ENCODE measurements at regions of chr16 and their contacts with region 1.

Region 1: GRCh38 chr16:67816240-67817031 is 9.7 kb downstream of the TSNAXIP1 start:
- DNase-seq: no peak
- ATAC-seq: peak; percentile 98
- H3K4me3 ChIP-seq: no peak overlapping the region
- H3K27ac ChIP-seq: no peak overlapping the region
- H3K4me1 ChIP-seq: no peaks in the 10 kb centered on the region
- H3K27me3 ChIP-seq: no peaks in the 10 kb centered on the region
- CTCF ChIP-seq: peak; percentile 100; a peak in 5 of 6 replicates
- EP300 ChIP-seq: no peak
- POLR2A ChIP-seq: no peak
- RAD21 ChIP-seq: peak; percentile 85

Region 2: GRCh38 chr16:67301080-67301782 is 515.2 kb before region 1 on chr16:
- CTCF ChIA-PET with region 1: no interaction called
- POLR2A ChIA-PET with region 1: no interaction called
- RAD21 ChIA-PET with region 1: no interaction called
- SMC1A ChIA-PET with region 1: no interaction called
- in situ Hi-C with region 1: no loop called
- intact Hi-C with region 1: no loop called
- DNase-seq: no peak
- ATAC-seq: no peak
- H3K4me3 ChIP-seq: no peak overlapping the region
- H3K27ac ChIP-seq: no peak overlapping the region
- H3K4me1 ChIP-seq: no peaks in the 10 kb centered on the region
- H3K27me3 ChIP-seq: peaks cover 0 to 2% of the 10 kb centered on the region in 2 experiments; a peak in 1 of 4 replicates
- CTCF ChIP-seq: no peak
- EP300 ChIP-seq: no peak
- POLR2A ChIP-seq: no peak
- RAD21 ChIP-seq: no peak

Region 3: DNA sequence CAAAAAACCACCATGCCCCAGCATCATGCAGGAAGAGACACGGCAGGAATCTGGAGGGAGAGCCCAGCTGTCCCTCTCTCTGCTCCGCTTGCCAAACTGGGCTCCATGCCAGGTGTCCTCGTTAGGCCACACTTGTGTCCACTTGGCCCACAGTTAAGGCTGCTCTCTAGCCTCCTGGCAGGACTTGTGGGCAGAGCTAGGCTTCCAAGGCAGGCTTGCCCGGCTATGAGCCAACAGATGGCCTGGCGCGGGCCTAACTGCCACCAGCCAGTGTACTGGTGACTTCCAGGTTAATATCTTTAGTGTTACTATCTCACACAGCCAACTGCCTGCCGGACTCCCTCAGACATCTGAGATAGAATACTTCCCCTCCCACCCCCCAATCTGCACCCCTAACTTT is 346.1 kb before region 1 on chr16:
- CTCF ChIA-PET with region 1: no interaction called
- POLR2A ChIA-PET with region 1: no interaction called
- RAD21 ChIA-PET with region 1: no interaction called
- SMC1A ChIA-PET with region 1: no interaction called
- in situ Hi-C with region 1: no loop called
- intact Hi-C with region 1: no loop called
- DNase-seq: no peak
- ATAC-seq: no peak
- H3K4me3 ChIP-seq: no peak overlapping the region
- H3K27ac ChIP-seq: no peak overlapping the region
- H3K4me1 ChIP-seq: peaks cover 15% of the 10 kb centered on the region
- H3K27me3 ChIP-seq: no peaks in the 10 kb centered on the region
- CTCF ChIP-seq: no peak
- EP300 ChIP-seq: no peak
- POLR2A ChIP-seq: no peak
- RAD21 ChIP-seq: no peak

Region 4: GRCh38 chr16:67672739-67673662 is 143.4 kb before region 1 on chr16:
- CTCF ChIA-PET with region 1: interaction called, 25 read pairs
- POLR2A ChIA-PET with region 1: no interaction called
- RAD21 ChIA-PET with region 1: interaction called, 19 read pairs
- SMC1A ChIA-PET with region 1: interaction called, 4 read pairs
- in situ Hi-C with region 1: no loop called
- intact Hi-C with region 1: loop called (anchors 1 kb)
- DNase-seq: no peak
- ATAC-seq: peak; percentile 59
- H3K4me3 ChIP-seq: no peak overlapping the region
- H3K27ac ChIP-seq: no peak overlapping the region
- H3K4me1 ChIP-seq: peaks cover 24% of the 10 kb centered on the region
- H3K27me3 ChIP-seq: no peaks in the 10 kb centered on the region
- CTCF ChIP-seq: peak; percentile 83 to 94 (median 88)
- EP300 ChIP-seq: no peak
- POLR2A ChIP-seq: no peak
- RAD21 ChIP-seq: peak; percentile 94

Region 5: GRCh38 chr16:67800338-67800926 is 16.0 kb before region 1 on chr16:
- CTCF ChIA-PET with region 1: interaction called, 44 read pairs
- POLR2A ChIA-PET with region 1: interaction called, 7 read pairs
- RAD21 ChIA-PET with region 1: no interaction called
- SMC1A ChIA-PET with region 1: interaction called, 4 read pairs
- in situ Hi-C with region 1: no loop called
- intact Hi-C with region 1: no loop called
- DNase-seq: no peak
- ATAC-seq: no peak
- H3K4me3 ChIP-seq: no peak overlapping the region
- H3K27ac ChIP-seq: no peak overlapping the region
- H3K4me1 ChIP-seq: peaks cover 26% of the 10 kb centered on the region
- H3K27me3 ChIP-seq: no peaks in the 10 kb centered on the region
- CTCF ChIP-seq: no peak
- EP300 ChIP-seq: no peak
- POLR2A ChIP-seq: no peak
- RAD21 ChIP-seq: no peak

Region 6: GRCh38 chr16:67865316-67865715 is 48.9 kb after region 1 on chr16:
- CTCF ChIA-PET with region 1: interaction called, 53 read pairs
- POLR2A ChIA-PET with region 1: no interaction called
- RAD21 ChIA-PET with region 1: interaction called, 12 read pairs
- SMC1A ChIA-PET with region 1: interaction called, 5 read pairs
- in situ Hi-C with region 1: no loop called
- intact Hi-C with region 1: loop called (anchors 1 kb)
- DNase-seq: no peak
- ATAC-seq: peak; percentile 92
- H3K4me3 ChIP-seq: no peak overlapping the region
- H3K27ac ChIP-seq: no peak overlapping the region
- H3K4me1 ChIP-seq: no peaks in the 10 kb centered on the region
- H3K27me3 ChIP-seq: no peaks in the 10 kb centered on the region
- CTCF ChIP-seq: peak; percentile 51 to 62 (median 56); a peak in 5 of 6 replicates
- EP300 ChIP-seq: no peak
- POLR2A ChIP-seq: no peak
- RAD21 ChIP-seq: peak; percentile 42; the same call in 1 of the 2 replicates

Region 7: DNA sequence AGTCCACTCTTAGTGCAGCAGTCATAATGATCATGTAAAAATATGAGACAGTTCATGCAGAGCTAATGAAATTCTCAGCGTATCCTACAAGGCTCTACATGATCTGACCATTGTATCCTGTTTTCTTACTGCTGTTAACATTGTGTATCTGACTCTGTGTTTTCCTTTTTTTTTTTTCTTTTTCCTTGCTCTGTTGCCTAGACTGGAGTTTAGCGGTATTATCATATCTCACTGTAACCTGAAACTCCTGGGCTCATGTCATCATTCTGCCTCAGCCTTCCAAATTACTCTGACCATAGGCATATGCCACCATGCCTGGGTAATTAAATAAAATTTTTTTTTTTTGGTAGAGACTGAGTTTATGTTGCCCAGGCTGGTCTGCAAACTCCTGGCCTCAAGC is 218.8 kb after region 1 on chr16:
- CTCF ChIA-PET with region 1: interaction called, 27 read pairs
- POLR2A ChIA-PET with region 1: no interaction called
- RAD21 ChIA-PET with region 1: no interaction called
- SMC1A ChIA-PET with region 1: interaction called, 12 read pairs
- in situ Hi-C with region 1: loop called (anchors 5 kb)
- intact Hi-C with region 1: loop called (anchors 1 kb)
- DNase-seq: no peak
- ATAC-seq: no peak
- H3K4me3 ChIP-seq: no peak overlapping the region
- H3K27ac ChIP-seq: no peak overlapping the region
- H3K4me1 ChIP-seq: peaks cover 14% of the 10 kb centered on the region
- H3K27me3 ChIP-seq: no peaks in the 10 kb centered on the region
- CTCF ChIP-seq: no peak
- EP300 ChIP-seq: no peak
- POLR2A ChIP-seq: no peak
- RAD21 ChIP-seq: no peak

Measured in GM12878 (cell line).